ENCODE measurements at regions of chr19 and their contacts with region 1.

Region 1: DNA sequence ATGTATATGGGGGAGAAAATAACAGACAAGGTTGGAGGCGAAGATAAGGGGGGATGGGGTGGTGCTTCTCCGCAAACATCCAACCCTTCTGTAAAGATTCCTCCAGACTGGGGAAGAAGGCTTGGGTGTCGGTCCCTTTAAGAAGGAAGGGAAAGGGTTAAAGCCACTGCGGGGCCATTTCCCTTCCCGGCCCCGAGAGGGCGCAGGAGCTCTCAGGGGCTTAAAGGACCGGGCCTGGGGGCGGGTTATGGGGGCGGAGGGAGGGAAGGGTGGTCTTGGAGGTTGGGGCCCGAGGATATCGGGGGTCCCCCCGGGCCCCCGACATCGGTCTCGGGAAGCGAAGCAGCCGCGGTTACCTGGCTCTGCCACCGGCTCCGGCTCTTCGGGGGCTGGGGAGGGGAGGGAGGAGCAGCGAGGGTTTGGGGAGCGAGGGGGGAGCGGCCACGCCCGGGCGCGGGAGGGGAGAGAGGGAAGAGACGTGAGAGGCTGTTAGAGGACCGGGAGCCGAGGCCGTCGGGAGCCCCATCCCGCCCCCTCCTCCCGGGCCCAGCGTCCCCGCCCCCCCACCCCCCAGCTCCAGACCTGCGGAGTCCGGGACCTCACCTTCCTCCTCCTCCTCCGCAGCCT is 2.8 kb downstream of the TNNT1 start:
- DNase-seq: peak in 2 of 3 donors; percentile 66 to 67
- H3K4me3 ChIP-seq: peak overlapping the region in 4 of 7 experiments; percentile 4 to 19 (median 10)
- H3K27ac ChIP-seq: peak overlapping the region in 1 of 2 experiments; percentile 25
- H3K4me1 ChIP-seq: peaks cover 0 to 16% (median 14%) of the 10 kb centered on the region in 4 experiments
- H3K27me3 ChIP-seq: peaks cover 0 to 82% (median 2%) of the 10 kb centered on the region in 5 experiments

Region 2: GRCh38 chr19:55015126-55015525 is 131.1 kb before region 1 on chr19:
- CTCF ChIA-PET with region 1: no interaction called
- POLR2A ChIA-PET with region 1: no interaction called
- DNase-seq: no peak
- H3K4me3 ChIP-seq: no peak overlapping the region
- H3K27ac ChIP-seq: no peak overlapping the region
- H3K4me1 ChIP-seq: no peaks in the 10 kb centered on the region
- H3K27me3 ChIP-seq: no peaks in the 10 kb centered on the region

Region 3: DNA sequence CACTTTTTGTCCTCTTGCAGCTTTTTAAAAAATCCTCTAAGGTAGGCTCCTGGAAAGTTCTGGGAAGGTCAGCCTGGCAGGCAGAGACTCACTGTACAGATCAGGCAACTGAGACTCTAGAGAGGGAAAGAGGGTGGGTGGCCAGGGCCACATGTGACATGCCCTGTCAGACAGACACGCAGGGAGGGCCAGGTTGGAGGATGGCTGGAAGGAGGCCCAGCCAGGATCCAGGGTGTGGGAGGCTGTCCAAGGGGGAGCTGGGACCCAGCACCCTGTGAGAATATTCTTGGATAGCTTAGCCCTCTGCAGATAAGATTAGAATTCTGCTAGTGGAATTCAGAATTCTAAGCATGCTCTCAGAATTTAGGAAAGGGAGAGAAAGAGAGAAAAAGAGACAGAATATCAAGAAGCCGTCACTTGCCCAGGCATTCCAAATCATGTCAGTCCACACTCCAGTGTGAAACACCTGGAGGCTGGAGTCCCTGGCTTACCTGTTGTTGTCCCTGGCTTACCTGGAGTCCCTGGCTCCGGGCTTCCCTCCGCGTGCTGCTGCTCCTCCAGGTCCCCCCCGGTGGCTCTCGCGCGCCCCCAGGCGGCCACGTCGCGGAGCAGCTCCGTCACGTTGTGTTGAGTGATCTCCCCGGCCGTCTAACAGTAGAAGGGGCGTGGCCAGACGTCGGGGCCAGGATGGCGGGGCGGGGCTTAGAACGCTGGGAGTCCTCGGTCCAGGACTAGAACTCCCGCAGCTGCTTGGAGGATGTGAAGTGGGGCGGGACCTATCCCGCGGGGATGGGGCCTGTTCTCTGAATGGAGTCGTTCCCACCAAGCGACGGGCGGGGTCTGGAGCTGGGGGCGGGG is 14.2 kb after region 1 on chr19:
- CTCF ChIA-PET with region 1: interaction called, 35 read pairs
- POLR2A ChIA-PET with region 1: interaction called, 8 read pairs
- DNase-seq: peak; percentile 88 to 92 (median 90)
- H3K4me3 ChIP-seq: peak overlapping the region in 1 of 7 experiments; percentile 4
- H3K27ac ChIP-seq: no peak overlapping the region
- H3K4me1 ChIP-seq: peaks cover 0 to 27% (median 14%) of the 10 kb centered on the region in 4 experiments
- H3K27me3 ChIP-seq: peaks cover 2 to 53% (median 12%) of the 10 kb centered on the region in 5 experiments

Region 4: GRCh38 chr19:55166530-55167268 is 20.5 kb after region 1 on chr19 and contains the start of gene DNAAF3:
- CTCF ChIA-PET with region 1: interaction called, 11 read pairs
- POLR2A ChIA-PET with region 1: no interaction called
- DNase-seq: peak; percentile 97 to 98 (median 97)
- H3K4me3 ChIP-seq: peak within 1 kb of the TSS; percentile 44 to 84 (median 67)
- H3K27ac ChIP-seq: peak within 1 kb of the TSS; percentile 83 to 90
- H3K4me1 ChIP-seq: peaks cover 0 to 16% (median 14%) of the 10 kb centered on the region in 4 experiments
- H3K27me3 ChIP-seq: peaks cover 2 to 40% (median 6%) of the 10 kb centered on the region in 5 experiments

Region 5: DNA sequence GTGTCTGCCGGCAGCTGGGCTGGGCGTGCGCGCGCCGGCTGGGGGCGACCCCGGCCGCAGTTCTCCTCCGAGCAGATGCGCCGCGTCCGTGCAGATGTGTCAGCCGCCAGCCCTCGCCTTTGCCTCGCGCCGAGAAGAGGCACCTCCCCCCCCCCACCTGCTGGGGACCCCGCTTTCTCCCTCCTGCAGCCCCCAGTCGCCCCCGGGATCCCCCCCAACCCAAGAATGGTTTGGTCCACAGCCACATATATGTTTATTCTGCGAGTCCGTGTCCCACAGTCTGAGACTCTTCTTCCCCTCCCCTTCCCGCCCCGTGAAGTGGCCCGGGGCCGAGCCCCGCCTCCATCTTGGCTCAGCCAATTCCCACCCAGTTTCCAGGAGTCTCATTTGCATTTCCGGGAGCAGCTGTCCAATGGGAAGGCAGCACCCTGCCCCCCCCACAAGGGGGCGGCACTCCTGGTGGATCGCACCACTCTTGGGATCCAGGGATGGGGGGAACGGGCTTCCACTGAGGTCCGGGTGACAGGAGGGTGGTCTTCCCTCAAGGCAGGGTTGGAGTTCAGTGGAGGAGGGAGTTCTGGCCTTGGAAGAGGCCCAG is 306.7 kb after region 1 on chr19:
- CTCF ChIA-PET with region 1: interaction called, 10 read pairs
- POLR2A ChIA-PET with region 1: no interaction called
- DNase-seq: peak; percentile 76 to 86 (median 84)
- H3K4me3 ChIP-seq: peak overlapping the region in 1 of 7 experiments; percentile 38
- H3K27ac ChIP-seq: no peak overlapping the region
- H3K4me1 ChIP-seq: peaks cover 0 to 18% (median 10%) of the 10 kb centered on the region in 4 experiments
- H3K27me3 ChIP-seq: peaks cover 0 to 48% (median 18%) of the 10 kb centered on the region in 5 experiments

Measured in common myeloid progenitor, CD34-positive (primary cell).